ENCODE measurements at regions of chr9 and their contacts with region 1.

Region 1: GRCh38 chr9:4984621-4985385 is at the start of gene JAK2:
- DNase-seq: peak; percentile 95
- H3K4me3 Mint-ChIP-seq: peak within 1 kb of the TSS; percentile 90
- H3K27ac Mint-ChIP-seq: peak within 1 kb of the TSS; percentile 76
- H3K4me1 Mint-ChIP-seq: peaks cover 36% of the 10 kb centered on the region
- H3K27me3 Mint-ChIP-seq: no peaks in the 10 kb centered on the region
- CTCF ChIP-seq: peak; percentile 43
- total RNA-seq, gene JAK2: 4.3 and 6.6 TPM in 2 replicates

Region 2: GRCh38 chr9:4662108-4662988 is 322.5 kb before region 1 on chr9 and contains the start of gene PLPP6:
- CTCF ChIA-PET with region 1: interaction called, 3 read pairs
- POLR2A ChIA-PET with region 1: no interaction called
- intact Hi-C with region 1: loop called (anchors 2 kb)
- DNase-seq: peak; percentile 93
- H3K4me3 Mint-ChIP-seq: peak within 1 kb of the TSS; percentile 72
- H3K27ac Mint-ChIP-seq: peak within 1 kb of the TSS; percentile 65
- H3K4me1 Mint-ChIP-seq: peaks cover 40% of the 10 kb centered on the region
- H3K27me3 Mint-ChIP-seq: no peaks in the 10 kb centered on the region
- CTCF ChIP-seq: peak; percentile 29
- total RNA-seq, gene PLPP6: 6.3 and 8.3 TPM in 2 replicates

Region 3: GRCh38 chr9:4769321-4770080 is 215.3 kb before region 1 on chr9:
- CTCF ChIA-PET with region 1: interaction called, 171 read pairs
- POLR2A ChIA-PET with region 1: no interaction called
- intact Hi-C with region 1: no loop called
- DNase-seq: peak; percentile 57
- H3K4me3 Mint-ChIP-seq: no peak overlapping the region
- H3K27ac Mint-ChIP-seq: no peak overlapping the region
- H3K4me1 Mint-ChIP-seq: no peaks in the 10 kb centered on the region
- H3K27me3 Mint-ChIP-seq: no peaks in the 10 kb centered on the region
- CTCF ChIP-seq: no peak

Region 4: DNA sequence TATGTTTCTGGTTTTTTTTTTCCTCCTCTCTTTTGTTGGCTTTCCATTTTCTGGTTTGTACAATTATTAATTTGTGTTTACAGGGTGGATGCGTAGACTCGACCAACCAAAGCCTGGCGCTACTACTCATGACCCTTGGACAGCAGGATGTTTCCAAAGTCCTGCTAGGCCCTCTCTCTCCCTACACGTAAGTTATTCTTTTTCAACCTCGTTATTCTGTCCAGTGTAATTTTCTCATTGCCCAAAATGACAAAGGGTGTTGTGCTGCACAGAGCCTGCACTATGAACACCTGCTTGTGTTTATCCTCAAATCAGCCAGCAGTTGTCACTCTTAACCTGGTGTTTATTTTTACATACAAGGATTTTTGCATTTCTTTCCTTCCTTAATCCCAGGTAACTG is 135.4 kb before region 1 on chr9:
- CTCF ChIA-PET with region 1: interaction called, 20 read pairs
- POLR2A ChIA-PET with region 1: interaction called, 10 read pairs
- intact Hi-C with region 1: loop called (anchors 1 kb)
- DNase-seq: no peak
- H3K4me3 Mint-ChIP-seq: no peak overlapping the region
- H3K27ac Mint-ChIP-seq: no peak overlapping the region
- H3K4me1 Mint-ChIP-seq: peaks cover 18% of the 10 kb centered on the region
- H3K27me3 Mint-ChIP-seq: no peaks in the 10 kb centered on the region
- CTCF ChIP-seq: no peak

Region 5: DNA sequence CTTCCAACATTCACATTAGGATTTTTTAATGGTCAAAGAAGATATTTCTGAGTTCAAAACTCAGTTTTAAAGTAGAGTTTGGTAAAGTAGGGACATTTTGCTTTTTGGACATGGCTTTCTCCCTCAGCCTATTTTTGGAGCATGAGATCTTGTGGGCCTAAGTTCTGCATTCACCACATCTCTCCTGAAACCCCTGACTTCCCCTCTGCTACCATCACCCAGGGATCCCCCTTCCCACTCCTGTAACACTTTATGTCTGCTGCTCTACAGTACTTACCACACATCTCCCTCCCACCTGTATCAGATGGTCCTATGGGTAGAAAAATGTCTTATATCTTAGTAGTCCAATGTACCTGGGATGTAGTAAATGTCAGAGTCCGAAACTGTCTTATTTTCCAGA is 48.0 kb before region 1 on chr9:
- CTCF ChIA-PET with region 1: no interaction called
- POLR2A ChIA-PET with region 1: no interaction called
- intact Hi-C with region 1: no loop called
- DNase-seq: no peak
- H3K4me3 Mint-ChIP-seq: no peak overlapping the region
- H3K27ac Mint-ChIP-seq: no peak overlapping the region
- H3K4me1 Mint-ChIP-seq: peaks cover 8% of the 10 kb centered on the region
- H3K27me3 Mint-ChIP-seq: no peaks in the 10 kb centered on the region
- CTCF ChIP-seq: no peak

Region 6: DNA sequence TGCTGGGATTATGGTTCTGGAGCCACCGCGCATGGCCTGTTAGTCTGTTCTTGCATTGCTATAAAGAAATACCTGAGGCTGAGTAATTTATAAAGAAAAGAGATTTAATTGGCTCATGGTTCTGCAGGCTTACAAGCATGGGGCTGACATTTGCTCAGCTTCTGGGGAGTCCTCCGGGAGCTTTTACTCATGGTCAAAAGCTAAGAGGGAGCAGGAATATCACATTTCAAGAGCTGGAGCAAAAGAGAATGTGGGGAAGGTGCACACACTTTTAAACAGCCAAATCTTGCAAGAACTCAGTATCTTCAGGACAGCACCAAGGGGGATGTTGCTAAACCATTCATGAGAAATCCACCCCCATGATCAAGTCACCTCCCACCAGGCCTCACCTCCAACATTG is 12.4 kb after region 1 on chr9:
- CTCF ChIA-PET with region 1: interaction called, 24 read pairs
- POLR2A ChIA-PET with region 1: interaction called, 5 read pairs
- intact Hi-C with region 1: no loop called
- DNase-seq: no peak
- H3K4me3 Mint-ChIP-seq: no peak overlapping the region
- H3K27ac Mint-ChIP-seq: no peak overlapping the region
- H3K4me1 Mint-ChIP-seq: no peaks in the 10 kb centered on the region
- H3K27me3 Mint-ChIP-seq: no peaks in the 10 kb centered on the region
- CTCF ChIP-seq: no peak